GM23248 (cell line): ENCODE measurements at regions of chr10 and their contacts with region 1.

Region 1: GRCh38 chr10:18594574-18595156 is 56.7 kb downstream of the NSUN6 start:
- DNase-seq: no peak
- H3K4me3 ChIP-seq: no peak overlapping the region
- H3K27ac ChIP-seq: no peak overlapping the region
- H3K4me1 ChIP-seq: no peaks in the 10 kb centered on the region
- H3K27me3 ChIP-seq: no peaks in the 10 kb centered on the region

Region 2: GRCh38 chr10:18523025-18523424 is 71.6 kb before region 1 on chr10:
- in situ Hi-C with region 1: loop called (anchors 10 kb)
- DNase-seq: peak; percentile 25
- H3K4me3 ChIP-seq: no peak overlapping the region
- H3K27ac ChIP-seq: no peak overlapping the region
- H3K4me1 ChIP-seq: peaks cover 10% of the 10 kb centered on the region
- H3K27me3 ChIP-seq: no peaks in the 10 kb centered on the region